Esophagus muscularis mucosa (tissue), 4 donors: ENCODE measurements at regions of chr5 and their contacts with region 1.

Region 1: GRCh38 chr5:157582731-157583620 is 7.4 kb upstream of the ADAM19 start:
- DNase-seq: no peak
- H3K4me3 ChIP-seq: no peak overlapping the region
- H3K27ac ChIP-seq: no peak overlapping the region
- H3K4me1 ChIP-seq: no peaks in the 10 kb centered on the region
- H3K27me3 ChIP-seq: no peaks in the 10 kb centered on the region
- CTCF ChIP-seq: no peak
- EP300 ChIP-seq: no peak
- POLR2A ChIP-seq: no peak

Region 2: DNA sequence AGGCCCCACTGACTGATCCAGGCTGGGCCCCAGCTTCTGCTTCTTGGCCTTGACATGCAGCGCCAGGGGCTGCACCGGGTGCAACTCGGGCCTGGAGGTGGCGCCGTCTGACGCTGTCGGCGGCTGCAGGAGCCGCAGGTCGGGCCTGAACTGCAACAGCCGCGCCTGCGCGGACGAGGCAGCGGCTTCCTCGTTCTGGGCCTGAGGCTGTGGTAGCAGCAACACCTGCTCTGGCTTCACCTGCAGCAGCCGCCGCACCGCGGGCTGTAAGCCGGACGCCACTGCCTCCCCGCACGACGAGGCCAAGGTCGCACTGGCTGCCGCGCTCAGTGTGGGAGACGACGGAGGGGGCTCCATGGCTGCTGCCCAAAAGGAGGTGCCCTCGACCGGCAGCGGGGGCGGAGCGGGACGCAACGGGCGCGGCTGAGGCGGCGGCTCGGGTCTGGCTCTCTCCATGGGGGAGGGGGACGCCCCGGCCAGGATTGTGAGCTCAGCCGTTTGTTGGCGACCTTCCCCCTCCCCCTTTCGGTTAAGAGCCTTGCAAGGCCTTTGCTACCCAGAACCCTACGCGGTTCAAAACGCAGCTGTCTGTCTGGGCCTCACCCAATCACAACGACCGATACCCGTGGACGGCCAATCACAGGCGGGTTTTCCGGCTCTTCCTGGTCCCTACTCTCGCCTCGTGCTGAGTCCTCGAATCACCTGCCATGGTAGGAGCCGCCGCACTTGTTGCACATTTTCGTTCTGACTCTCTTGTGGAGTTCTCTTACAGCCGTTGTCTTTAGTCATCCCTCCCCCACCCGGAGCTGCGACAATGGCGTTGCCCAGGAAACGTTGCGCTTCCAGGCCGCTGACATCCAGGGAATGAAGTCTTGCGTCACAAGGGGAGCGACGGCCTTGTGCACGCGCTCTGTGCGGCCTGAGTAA is 68.9 kb after region 1 on chr5 and contains the start of gene SOX30:
- intact Hi-C with region 1: loop called (anchors 10 kb)
- DNase-seq: no peak
- H3K4me3 ChIP-seq: peak within 1 kb of the TSS; percentile 56 to 67 (median 60)
- H3K27ac ChIP-seq: peak within 1 kb of the TSS in 1 of 4 donors; percentile 17
- H3K4me1 ChIP-seq: peaks cover 4 to 12% (median 9%) of the 10 kb centered on the region in 4 donors
- H3K27me3 ChIP-seq: no peaks in the 10 kb centered on the region
- CTCF ChIP-seq: peak; percentile 35 to 48 (median 45)
- EP300 ChIP-seq: no peak
- POLR2A ChIP-seq: no peak
- total RNA-seq, gene SOX30: 0.17 to 0.34 TPM in 2 of 4 donors, not detected in the others